MCF 10A (cell line): ENCODE measurements at regions of chr3 and their contacts with region 1.

Region 1: DNA sequence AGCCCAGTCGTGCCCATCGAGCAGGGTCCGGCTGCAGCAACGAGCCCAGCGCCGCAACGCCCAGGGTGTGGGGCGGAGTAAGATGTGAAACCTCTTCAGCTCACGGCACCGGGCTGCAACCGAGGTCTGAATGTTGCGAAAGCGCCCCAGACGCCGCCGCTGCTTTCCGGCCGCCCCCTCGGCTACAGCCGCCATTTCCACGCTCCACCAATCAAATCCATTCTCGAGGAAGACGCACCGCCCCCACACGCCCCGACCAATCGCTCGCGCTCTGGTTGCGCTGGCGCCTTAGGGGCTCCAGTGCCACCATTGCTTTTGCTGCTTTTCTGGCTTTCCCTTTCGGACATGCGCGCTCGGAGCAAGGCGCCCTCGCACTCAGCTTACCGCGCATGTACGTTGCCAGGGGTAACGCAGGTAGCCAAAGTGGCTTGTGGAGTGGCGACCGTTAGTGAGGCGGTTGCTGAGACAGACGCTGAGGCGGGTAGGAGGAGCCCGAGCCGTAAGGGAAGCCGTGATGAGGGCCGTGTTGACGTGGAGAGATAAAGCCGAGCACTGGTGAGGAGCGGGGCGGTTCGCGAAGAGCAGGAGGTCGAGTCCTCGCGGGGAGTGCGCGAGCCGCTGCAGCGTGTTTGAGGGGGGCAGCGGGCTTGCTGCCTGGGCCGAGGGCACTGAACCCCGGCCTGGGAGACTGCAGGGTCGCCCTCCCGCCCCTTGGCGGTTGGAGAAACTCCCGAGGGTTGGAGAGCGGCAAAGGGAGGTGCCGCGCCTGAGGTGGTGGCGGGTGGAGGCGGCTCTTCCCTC is at the starts of genes IFT122 and MBD4:
- DNase-seq: peak; percentile 99
- H3K4me3 Mint-ChIP-seq: peak within 1 kb of the TSS; percentile 83
- H3K27ac Mint-ChIP-seq: peak within 1 kb of the TSS; percentile 96
- H3K4me1 Mint-ChIP-seq: peaks cover 49% of the 10 kb centered on the region
- H3K27me3 Mint-ChIP-seq: no peaks in the 10 kb centered on the region
- CTCF ChIP-seq: no peak
- total RNA-seq, gene IFT122: 18.7 and 21.0 TPM in 2 replicates
- total RNA-seq, gene MBD4: 30.6 and 35.8 TPM in 2 replicates

Region 2: GRCh38 chr3:129120254-129121004 is 319.6 kb before region 1 on chr3:
- CTCF ChIA-PET with region 1: no interaction called
- POLR2A ChIA-PET with region 1: interaction called, 12 read pairs
- intact Hi-C with region 1: no loop called
- DNase-seq: peak; percentile 98
- H3K4me3 Mint-ChIP-seq: peak overlapping the region; percentile 77
- H3K27ac Mint-ChIP-seq: peak overlapping the region; percentile 82
- H3K4me1 Mint-ChIP-seq: peaks cover 26% of the 10 kb centered on the region
- H3K27me3 Mint-ChIP-seq: no peaks in the 10 kb centered on the region
- CTCF ChIP-seq: no peak

Region 3: GRCh38 chr3:129224984-129225393 is 215.0 kb before region 1 on chr3:
- CTCF ChIA-PET with region 1: no interaction called
- POLR2A ChIA-PET with region 1: interaction called, 10 read pairs
- intact Hi-C with region 1: no loop called
- DNase-seq: peak; percentile 91
- H3K4me3 Mint-ChIP-seq: peak overlapping the region; percentile 41
- H3K27ac Mint-ChIP-seq: peak overlapping the region; percentile 80
- H3K4me1 Mint-ChIP-seq: peaks cover 23% of the 10 kb centered on the region
- H3K27me3 Mint-ChIP-seq: no peaks in the 10 kb centered on the region
- CTCF ChIP-seq: no peak

Region 4: DNA sequence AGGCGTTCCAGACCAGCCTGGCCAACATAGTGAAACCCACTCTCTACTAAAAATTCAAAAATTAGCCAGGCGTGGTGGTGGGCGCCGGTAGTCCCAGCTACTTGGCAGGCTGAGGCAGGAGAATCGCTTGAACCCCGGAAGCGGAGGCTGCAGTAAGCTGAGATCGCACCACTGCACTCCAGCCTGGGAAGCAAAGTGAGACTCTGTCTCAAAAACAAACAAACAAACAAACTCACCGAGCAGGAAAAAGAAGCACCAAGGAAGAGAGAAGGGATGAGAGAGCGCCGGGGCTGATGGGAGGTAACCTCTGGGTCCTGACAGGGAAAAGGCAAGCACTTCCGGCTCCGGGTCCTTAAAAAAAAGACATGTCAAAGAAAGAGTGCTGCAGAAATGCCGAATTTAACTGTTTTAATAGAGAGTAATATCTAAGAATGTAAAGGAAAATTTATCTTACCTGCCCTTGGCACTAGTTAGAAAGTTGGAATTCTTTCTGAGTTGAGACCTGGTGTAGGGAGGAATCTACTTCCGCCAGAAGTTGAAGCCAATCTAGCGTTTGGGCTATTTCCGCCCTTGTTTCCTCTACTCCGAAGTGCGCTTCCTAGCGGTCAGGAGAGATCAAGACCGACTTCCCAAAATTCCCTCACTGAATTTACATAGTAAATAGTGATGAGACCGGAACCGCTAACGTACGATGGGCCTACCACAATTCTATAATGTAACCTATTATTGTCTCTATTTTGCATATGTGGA is 40.7 kb before region 1 on chr3:
- CTCF ChIA-PET with region 1: interaction called, 6 read pairs
- POLR2A ChIA-PET with region 1: interaction called, 38 read pairs
- intact Hi-C with region 1: loop called (anchors 5 kb)
- DNase-seq: peak; percentile 97
- H3K4me3 Mint-ChIP-seq: peak overlapping the region; percentile 88
- H3K27ac Mint-ChIP-seq: peak overlapping the region; percentile 97
- H3K4me1 Mint-ChIP-seq: peaks cover 30% of the 10 kb centered on the region
- H3K27me3 Mint-ChIP-seq: no peaks in the 10 kb centered on the region
- CTCF ChIP-seq: peak; percentile 57

Region 5: GRCh38 chr3:129461022-129461421 is 21.0 kb after region 1 on chr3:
- CTCF ChIA-PET with region 1: interaction called, 3 read pairs
- POLR2A ChIA-PET with region 1: interaction called, 31 read pairs
- intact Hi-C with region 1: no loop called
- DNase-seq: peak; percentile 67
- H3K4me3 Mint-ChIP-seq: no peak overlapping the region
- H3K27ac Mint-ChIP-seq: peak overlapping the region; percentile 96
- H3K4me1 Mint-ChIP-seq: peaks cover 23% of the 10 kb centered on the region
- H3K27me3 Mint-ChIP-seq: no peaks in the 10 kb centered on the region
- CTCF ChIP-seq: no peak

Region 6: DNA sequence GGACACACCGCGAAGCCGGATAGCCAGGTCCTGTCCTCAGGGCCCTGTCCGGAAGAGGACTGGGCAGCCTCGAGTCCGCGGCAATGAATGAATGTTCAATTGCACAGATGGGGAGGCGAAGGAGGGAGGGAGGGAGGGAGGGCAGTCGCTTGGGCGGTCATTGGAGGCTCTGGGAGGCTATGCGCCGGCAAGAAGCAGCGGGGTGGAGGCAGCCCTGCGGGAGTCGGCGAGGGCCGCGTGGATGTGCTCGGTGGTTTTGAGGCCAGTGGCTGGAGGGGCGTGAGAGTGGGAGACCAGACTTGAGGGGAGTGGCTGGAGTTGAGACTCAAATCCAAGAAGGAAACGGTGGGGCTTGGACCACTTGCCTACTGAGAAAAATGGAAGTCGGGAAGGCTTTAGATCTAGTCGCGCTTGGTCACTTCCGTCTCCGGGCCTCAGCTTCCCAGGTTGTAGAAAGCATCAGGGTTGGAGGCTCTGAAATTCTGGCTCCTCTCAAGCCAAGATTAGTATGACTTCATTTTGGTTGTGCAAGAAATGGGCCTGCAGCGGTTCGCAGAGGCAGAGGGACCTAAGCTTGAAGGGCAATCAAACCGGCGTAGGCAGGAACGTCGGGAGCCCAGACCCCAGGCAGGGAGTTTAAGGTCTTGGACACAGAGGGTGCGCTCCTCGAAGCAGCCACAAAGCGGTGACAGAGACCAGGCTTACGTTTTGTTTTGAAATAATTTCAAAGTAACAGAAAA is 187.6 kb after region 1 on chr3:
- CTCF ChIA-PET with region 1: interaction called, 3 read pairs
- POLR2A ChIA-PET with region 1: interaction called, 16 read pairs
- intact Hi-C with region 1: no loop called
- DNase-seq: peak; percentile 92
- H3K4me3 Mint-ChIP-seq: peak overlapping the region; percentile 71
- H3K27ac Mint-ChIP-seq: peak overlapping the region; percentile 74
- H3K4me1 Mint-ChIP-seq: peaks cover 20% of the 10 kb centered on the region
- H3K27me3 Mint-ChIP-seq: no peaks in the 10 kb centered on the region
- CTCF ChIP-seq: peak; percentile 63